Gastrocnemius medialis (tissue), 4 donors: ENCODE measurements at regions of chr13 and their contacts with region 1.

Region 1: GRCh38 chr13:51814825-51815650 is 11.1 kb upstream of the DHRS12 start:
- DNase-seq: peak in 1 of 2 donors; percentile 51
- ATAC-seq: peak; percentile 46 to 79
- H3K4me3 ChIP-seq: peak overlapping the region in 2 of 4 donors; percentile 13 to 33
- H3K27ac ChIP-seq: no peak overlapping the region
- H3K4me1 ChIP-seq: peaks cover 16 to 21% of the 10 kb centered on the region in 2 donors
- H3K27me3 ChIP-seq: no peaks in the 10 kb centered on the region
- CTCF ChIP-seq: peak; percentile 58 to 85 (median 78)
- POLR2A ChIP-seq: no peak

Region 2: DNA sequence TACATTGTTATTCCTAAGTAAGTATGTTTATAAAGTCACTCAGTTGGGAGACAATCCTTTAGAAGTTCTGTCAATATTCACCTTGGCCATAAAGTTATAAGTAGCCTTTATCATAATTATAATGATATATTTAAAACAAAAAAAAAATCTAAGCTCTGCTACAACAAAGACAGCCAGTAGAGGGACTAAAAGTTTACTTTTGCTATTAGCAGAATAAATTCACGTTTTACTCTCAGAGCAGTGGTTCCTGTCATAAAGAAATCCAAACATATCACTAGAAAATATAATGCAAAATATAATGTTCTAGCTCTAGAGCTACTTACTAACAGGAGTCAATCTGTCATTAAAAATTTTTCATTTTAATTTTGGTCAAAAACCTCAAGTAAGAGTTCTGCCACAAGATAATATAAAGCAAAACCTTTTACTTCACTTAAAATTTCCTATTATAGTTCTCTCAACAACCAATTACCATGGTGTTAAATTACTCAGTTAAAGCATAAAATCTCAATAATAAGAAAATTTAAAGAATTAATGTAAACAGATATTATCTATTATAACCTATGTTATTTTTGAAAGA is 379.9 kb before region 1 on chr13:
- in situ Hi-C with region 1: loop called in 1 of 4 experiments (anchors 25 kb)
- intact Hi-C with region 1: no loop called
- DNase-seq: no peak
- ATAC-seq: no peak
- H3K4me3 ChIP-seq: no peak overlapping the region
- H3K27ac ChIP-seq: no peak overlapping the region
- H3K4me1 ChIP-seq: peaks cover 5 to 8% of the 10 kb centered on the region in 2 donors
- H3K27me3 ChIP-seq: no peaks in the 10 kb centered on the region
- CTCF ChIP-seq: peak in 3 of 5 experiments; percentile 29 to 47 (median 47)
- POLR2A ChIP-seq: no peak

Region 3: GRCh38 chr13:51803422-51804294 is 11.4 kb before region 1 on chr13 and contains the start of gene DHRS12:
- in situ Hi-C with region 1: no loop called
- intact Hi-C with region 1: no loop called
- DNase-seq: peak; percentile 68 to 85
- ATAC-seq: peak; percentile 81 to 87
- H3K4me3 ChIP-seq: peak within 1 kb of the TSS; percentile 74 to 99 (median 86)
- H3K27ac ChIP-seq: peak within 1 kb of the TSS; percentile 89 to 100 (median 96)
- H3K4me1 ChIP-seq: peaks cover 37 to 46% of the 10 kb centered on the region in 2 donors
- H3K27me3 ChIP-seq: no peaks in the 10 kb centered on the region
- CTCF ChIP-seq: peak in 1 of 5 experiments; percentile 4
- POLR2A ChIP-seq: peak; percentile 90 to 93
- total RNA-seq, gene DHRS12: 1.8 to 6.0 (median 4.7) TPM

Region 4: GRCh38 chr13:51832471-51833152 is 17.6 kb after region 1 on chr13:
- in situ Hi-C with region 1: no loop called
- intact Hi-C with region 1: loop called (anchors 1 kb)
- DNase-seq: peak; percentile 26 to 28
- ATAC-seq: peak; percentile 66 to 85
- H3K4me3 ChIP-seq: no peak overlapping the region
- H3K27ac ChIP-seq: no peak overlapping the region
- H3K4me1 ChIP-seq: no peaks in the 10 kb centered on the region
- H3K27me3 ChIP-seq: no peaks in the 10 kb centered on the region
- CTCF ChIP-seq: peak; percentile 14 to 58 (median 31)
- POLR2A ChIP-seq: no peak

Region 5: DNA sequence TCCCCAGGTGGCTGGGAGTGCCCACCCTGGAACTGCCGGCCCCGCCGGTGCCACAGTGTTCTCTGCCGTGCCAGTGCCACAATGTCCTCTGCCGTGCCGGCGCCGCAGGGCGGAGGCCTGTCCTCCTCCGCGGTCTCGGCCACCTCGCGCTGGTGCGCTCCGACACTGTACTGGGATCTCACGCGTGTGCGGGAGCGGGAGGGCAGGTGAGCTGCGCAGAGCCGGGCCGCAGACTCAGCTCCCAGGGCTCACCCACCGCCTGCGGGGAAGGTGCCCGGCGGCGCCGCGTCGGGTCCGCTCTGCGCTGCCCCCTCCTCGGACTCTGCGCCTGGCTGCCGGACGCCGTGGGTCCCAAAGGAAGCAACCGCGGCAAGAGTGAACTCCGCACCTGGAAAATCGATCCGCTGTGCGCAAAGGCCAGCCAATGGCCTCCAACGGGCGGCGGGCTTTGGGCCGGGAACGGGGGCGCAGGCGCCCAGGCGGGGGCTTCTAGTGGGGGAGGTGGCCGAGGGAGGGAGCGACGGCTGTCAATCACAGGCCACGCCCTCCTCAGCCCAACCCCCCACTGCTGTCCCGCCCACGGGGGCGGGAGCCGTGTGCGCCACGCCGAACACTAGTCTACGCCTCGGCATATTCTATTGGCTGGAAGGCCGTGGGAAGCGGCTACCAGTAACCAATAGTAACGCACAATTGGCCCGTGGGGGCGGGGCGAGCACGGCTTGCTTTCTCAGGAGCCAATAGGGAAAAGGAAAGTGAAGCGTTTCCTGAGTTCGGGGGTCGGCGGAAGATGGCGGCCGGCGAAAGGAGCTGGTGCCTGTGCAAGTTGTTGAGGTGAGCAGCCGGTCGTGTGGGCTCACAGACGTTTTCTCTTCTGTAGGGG is 196.8 kb after region 1 on chr13 and contains the start of gene ALG11:
- in situ Hi-C with region 1: loop called in 1 of 4 experiments (anchors 25 kb)
- intact Hi-C with region 1: loop called (anchors 5 kb)
- DNase-seq: peak; percentile 99
- ATAC-seq: peak; percentile 98
- H3K4me3 ChIP-seq: peak within 1 kb of the TSS; percentile 84 to 92 (median 88)
- H3K27ac ChIP-seq: peak within 1 kb of the TSS; percentile 83 to 90 (median 86)
- H3K4me1 ChIP-seq: peaks cover 24 to 25% of the 10 kb centered on the region in 2 donors
- H3K27me3 ChIP-seq: no peaks in the 10 kb centered on the region
- CTCF ChIP-seq: peak in 1 of 5 experiments; percentile 23
- POLR2A ChIP-seq: peak; percentile 44 to 64
- total RNA-seq, gene ALG11: 8.9 to 14.2 (median 10.1) TPM

Region 6: DNA sequence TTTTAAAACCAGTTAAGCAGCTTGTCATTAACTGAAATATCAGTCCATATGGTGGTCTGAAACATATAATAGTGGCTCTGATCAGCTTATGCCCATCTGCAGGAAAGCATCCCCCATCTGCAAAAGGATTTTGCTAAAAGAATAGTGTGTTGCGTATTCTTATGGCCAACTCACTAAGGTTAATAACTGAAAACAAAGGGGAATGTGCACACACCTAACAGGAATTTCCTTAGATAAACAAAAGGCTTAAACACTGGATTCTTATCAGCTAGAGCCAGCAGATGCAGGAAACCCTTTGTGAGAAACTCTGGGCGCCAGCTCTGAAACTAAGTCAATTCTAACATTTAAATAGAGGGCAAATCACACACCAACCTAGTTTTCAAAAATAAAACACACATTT is 613.3 kb after region 1 on chr13:
- in situ Hi-C with region 1: loop called in 1 of 4 experiments (anchors 25 kb)
- intact Hi-C with region 1: no loop called
- DNase-seq: no peak
- ATAC-seq: peak; percentile 50 to 61
- H3K4me3 ChIP-seq: no peak overlapping the region
- H3K27ac ChIP-seq: peak overlapping the region in 1 of 4 donors; percentile 20
- H3K4me1 ChIP-seq: no peaks in the 10 kb centered on the region
- H3K27me3 ChIP-seq: no peaks in the 10 kb centered on the region
- CTCF ChIP-seq: no peak
- POLR2A ChIP-seq: no peak

Region 7: DNA sequence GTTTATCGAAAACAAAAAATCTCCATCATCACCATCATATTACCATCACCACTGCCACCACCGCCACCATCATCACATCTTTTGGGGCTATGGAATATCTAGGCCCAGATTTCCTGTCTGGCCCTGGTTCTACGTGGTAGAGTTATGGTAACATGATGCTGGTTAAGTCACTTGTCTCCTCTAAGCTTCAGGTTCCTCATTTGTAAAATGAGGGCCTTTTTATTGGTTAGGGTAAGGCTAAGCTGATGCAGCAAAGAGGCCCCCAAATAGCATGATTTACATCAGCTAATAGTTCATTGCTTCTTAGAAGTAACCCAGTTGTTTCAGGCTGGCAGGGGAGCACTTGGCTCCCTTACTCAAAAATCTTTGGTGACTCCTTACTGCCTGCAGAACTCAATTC is 995.5 kb after region 1 on chr13:
- in situ Hi-C with region 1: no loop called
- intact Hi-C with region 1: no loop called
- DNase-seq: no peak
- ATAC-seq: no peak
- H3K4me3 ChIP-seq: no peak overlapping the region
- H3K27ac ChIP-seq: no peak overlapping the region
- H3K4me1 ChIP-seq: no peaks in the 10 kb centered on the region
- H3K27me3 ChIP-seq: no peaks in the 10 kb centered on the region
- CTCF ChIP-seq: no peak
- POLR2A ChIP-seq: no peak